Left ventricle myocardium inferior (tissue), 1 donor: ENCODE measurements at regions of chr17 and their contacts with region 1.

Region 1: GRCh38 chr17:39164675-39165143 is 1.3 kb downstream of the ARL5C start:
- DNase-seq: peak; percentile 92
- H3K4me3 ChIP-seq: peak overlapping the region; percentile 71
- H3K27ac ChIP-seq: peak overlapping the region; percentile 53
- H3K4me1 ChIP-seq: peaks cover 40% of the 10 kb centered on the region
- H3K27me3 ChIP-seq: no peaks in the 10 kb centered on the region
- CTCF ChIP-seq: peak; percentile 85

Region 2: DNA sequence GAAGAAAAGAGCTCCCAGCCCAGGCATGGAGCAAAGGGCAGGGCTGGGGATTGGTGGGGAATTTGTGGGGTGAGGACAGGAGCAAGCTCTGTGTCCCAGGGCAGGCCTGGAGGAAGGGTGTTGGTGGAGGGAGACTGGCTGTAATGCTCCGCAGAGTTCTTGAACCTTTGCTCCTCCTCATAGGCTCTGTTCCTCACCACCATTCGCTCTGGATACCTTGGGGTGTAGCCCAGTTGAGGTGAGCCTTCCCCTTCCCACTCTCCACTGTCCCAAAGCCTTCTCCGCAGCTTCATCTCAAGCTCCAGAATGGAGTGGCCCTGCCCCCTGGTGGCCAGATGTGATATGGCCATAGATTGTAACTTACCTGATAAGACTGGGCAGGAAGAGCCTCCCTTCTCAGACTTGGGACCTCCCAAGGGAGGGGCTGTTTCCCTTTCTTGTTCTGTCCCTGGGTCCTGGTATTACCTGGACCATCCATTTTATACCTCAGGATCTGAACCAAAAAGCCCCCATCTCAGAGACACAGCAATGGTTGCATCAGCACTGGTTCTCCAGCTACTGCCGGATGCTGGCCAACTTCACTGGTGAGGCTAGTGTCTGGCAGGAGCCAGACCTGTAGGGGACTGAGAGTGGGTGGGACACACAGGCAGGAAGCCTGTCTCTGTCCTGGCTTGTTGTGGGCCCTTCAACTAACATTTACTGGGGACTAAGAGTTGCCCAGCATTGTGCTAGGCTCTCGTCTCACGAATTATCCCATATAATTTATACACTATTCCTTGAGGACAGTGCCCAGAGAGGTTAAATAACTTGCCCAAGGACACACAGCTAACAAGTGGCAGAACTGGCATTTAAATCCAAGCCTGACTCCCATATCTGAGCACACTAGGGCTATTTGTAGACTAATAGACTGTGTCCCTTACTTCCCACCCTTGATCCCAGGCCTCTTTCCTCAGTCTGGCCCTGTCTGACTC is 80.2 kb after region 1 on chr17:
- intact Hi-C with region 1: loop called (anchors 10 kb)
- DNase-seq: peak; percentile 77
- H3K4me3 ChIP-seq: no peak overlapping the region
- H3K27ac ChIP-seq: no peak overlapping the region
- H3K4me1 ChIP-seq: peaks cover 18% of the 10 kb centered on the region
- H3K27me3 ChIP-seq: peaks cover 9% of the 10 kb centered on the region
- CTCF ChIP-seq: peak; percentile 96